Activated CD4-positive, alpha-beta memory T cell treated with anti-CD3 and anti-CD28 coated beads, Interleukin-2, amount 10 ng/mL, durations not matched to agents 7 days and 5 days (primary cell): ENCODE measurements at regions of chr11 and their contacts with region 1.

Region 1: GRCh38 chr11:62841361-62842184 is 2.2 kb upstream of the WDR74 start:
- DNase-seq: peak; percentile 87
- H3K4me3 Mint-ChIP-seq: no peak overlapping the region
- H3K27ac Mint-ChIP-seq: no peak overlapping the region
- H3K4me1 Mint-ChIP-seq: peaks cover 27% of the 10 kb centered on the region
- H3K27me3 Mint-ChIP-seq: no peaks in the 10 kb centered on the region

Region 2: DNA sequence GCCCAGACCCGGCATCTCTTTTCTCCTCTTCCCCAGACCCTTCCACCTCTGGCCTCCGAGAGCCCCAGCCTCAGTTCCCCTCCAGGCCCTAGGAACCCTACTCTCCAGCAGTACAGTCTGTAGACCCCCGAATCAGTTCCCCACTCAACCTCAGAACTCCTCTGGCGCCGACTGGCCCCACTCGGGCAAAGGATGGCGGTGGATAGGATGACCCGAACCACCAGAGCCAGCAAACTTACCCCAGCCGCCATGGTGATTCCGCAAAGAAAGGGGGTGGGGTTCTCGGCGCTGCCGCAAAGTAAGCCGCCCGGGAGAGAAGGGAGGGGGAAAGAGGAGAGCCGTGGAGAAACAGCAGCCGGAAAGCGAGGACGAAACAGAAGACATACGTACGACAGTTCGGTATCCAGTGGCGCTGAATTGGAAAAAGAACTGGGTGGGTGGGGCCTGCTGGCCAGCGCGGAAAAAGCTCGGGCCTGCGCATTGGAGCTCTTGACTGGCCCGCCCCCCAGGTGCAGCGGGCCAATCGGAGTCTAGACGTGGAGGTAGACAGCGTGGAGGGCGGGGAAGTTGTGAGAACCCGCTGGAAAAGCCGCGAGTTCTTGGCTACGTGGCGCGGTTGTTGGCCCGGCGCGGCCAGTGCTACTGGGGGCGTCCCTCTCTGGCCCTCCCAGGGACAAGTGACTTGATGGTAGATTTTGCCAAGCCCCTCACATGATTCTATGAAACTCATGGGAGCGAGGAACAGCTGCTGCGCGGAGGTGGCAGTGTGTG is 267.8 kb before region 1 on chr11 and contains the start of gene EEF1G:
- CTCF ChIA-PET with region 1: no interaction called
- POLR2A ChIA-PET with region 1: interaction called, 23 read pairs
- DNase-seq: peak; percentile 99
- H3K4me3 Mint-ChIP-seq: peak within 1 kb of the TSS; percentile 94
- H3K27ac Mint-ChIP-seq: peak within 1 kb of the TSS; percentile 91
- H3K4me1 Mint-ChIP-seq: peaks cover 58% of the 10 kb centered on the region
- H3K27me3 Mint-ChIP-seq: no peaks in the 10 kb centered on the region
- total RNA-seq, gene EEF1G: 991 to 999 TPM

Region 3: DNA sequence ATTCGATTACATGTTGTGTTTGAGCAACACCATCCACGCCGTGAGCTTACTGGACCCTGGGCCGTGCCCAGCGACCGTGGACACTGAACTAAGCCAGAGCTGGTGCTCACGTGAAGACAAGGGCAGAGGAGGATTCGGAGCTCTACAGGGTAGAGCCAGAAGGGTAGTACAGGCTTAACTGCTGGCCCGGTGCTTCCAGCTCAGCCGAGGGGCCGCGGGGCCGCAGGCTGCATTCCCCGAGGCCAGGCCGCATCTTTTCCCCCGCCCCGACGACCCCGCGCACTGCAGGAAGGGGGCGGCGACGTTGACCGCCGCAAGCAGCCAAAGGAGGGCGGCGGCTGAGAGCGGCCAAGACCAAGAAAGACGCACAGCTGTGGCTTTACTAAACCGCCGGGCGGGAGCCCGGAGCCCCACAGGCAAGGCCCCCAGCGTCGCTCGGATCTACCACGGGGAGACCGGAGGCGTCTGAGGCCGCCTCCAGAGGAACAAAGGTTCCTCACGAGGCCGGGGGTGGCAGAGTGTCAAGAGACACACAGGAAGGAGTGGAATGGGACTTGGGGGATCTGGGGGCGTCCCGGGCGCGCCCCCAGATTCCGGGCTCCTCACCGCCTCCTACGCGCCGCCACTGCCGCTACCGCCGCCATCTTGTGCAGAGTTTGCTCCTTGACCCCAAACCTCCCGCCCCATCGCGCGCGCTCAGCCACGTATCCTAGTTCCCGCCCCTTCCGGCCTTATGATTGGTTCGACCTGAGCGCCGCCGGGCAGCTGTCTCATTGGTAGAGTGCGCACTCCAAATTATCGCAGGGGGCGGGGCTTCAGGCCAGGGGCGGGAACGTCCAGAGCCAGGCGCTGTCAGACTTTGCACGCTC is 195.4 kb before region 1 on chr11 and contains the start of gene GANAB:
- CTCF ChIA-PET with region 1: no interaction called
- POLR2A ChIA-PET with region 1: interaction called, 19 read pairs
- DNase-seq: peak; percentile 99
- H3K4me3 Mint-ChIP-seq: peak within 1 kb of the TSS; percentile 99
- H3K27ac Mint-ChIP-seq: peak within 1 kb of the TSS; percentile 94
- H3K4me1 Mint-ChIP-seq: peaks cover 47% of the 10 kb centered on the region
- H3K27me3 Mint-ChIP-seq: no peaks in the 10 kb centered on the region
- total RNA-seq, gene GANAB: 278 to 284 TPM

Region 4: GRCh38 chr11:62713343-62713742 is 128.2 kb before region 1 on chr11:
- CTCF ChIA-PET with region 1: no interaction called
- POLR2A ChIA-PET with region 1: interaction called, 84 read pairs
- DNase-seq: no peak
- H3K4me3 Mint-ChIP-seq: peak overlapping the region; percentile 47
- H3K27ac Mint-ChIP-seq: peak overlapping the region; percentile 93
- H3K4me1 Mint-ChIP-seq: peaks cover 78% of the 10 kb centered on the region
- H3K27me3 Mint-ChIP-seq: no peaks in the 10 kb centered on the region

Region 5: DNA sequence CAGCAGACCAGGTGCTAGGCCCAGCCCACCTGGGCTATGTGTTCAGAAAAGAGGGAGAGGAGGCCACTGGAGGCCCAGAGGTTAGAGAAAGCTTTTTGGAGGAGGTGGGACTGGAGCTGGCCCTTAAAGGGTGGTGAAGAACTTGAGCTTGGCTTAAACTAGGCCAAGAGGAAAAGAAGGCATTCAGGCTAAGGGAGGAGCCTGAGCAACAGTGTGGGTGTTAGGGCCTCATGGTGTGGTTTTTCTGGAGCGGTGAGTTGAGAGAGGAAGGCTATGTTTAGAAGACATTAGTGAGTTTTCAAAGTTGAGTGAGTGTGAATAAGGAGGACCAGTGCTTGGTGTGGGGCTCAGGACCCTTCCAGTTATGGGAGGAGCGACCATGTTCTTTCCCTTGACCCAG is 64.2 kb before region 1 on chr11:
- CTCF ChIA-PET with region 1: no interaction called
- POLR2A ChIA-PET with region 1: interaction called, 73 read pairs
- DNase-seq: no peak
- H3K4me3 Mint-ChIP-seq: no peak overlapping the region
- H3K27ac Mint-ChIP-seq: peak overlapping the region; percentile 49
- H3K4me1 Mint-ChIP-seq: peaks cover 13% of the 10 kb centered on the region
- H3K27me3 Mint-ChIP-seq: no peaks in the 10 kb centered on the region

Region 6: GRCh38 chr11:62816557-62816956 is 25.0 kb before region 1 on chr11:
- CTCF ChIA-PET with region 1: interaction called, 4 read pairs
- POLR2A ChIA-PET with region 1: interaction called, 13 read pairs
- DNase-seq: no peak
- H3K4me3 Mint-ChIP-seq: no peak overlapping the region
- H3K27ac Mint-ChIP-seq: no peak overlapping the region
- H3K4me1 Mint-ChIP-seq: peaks cover 6% of the 10 kb centered on the region
- H3K27me3 Mint-ChIP-seq: no peaks in the 10 kb centered on the region

Region 7: GRCh38 chr11:62880803-62881578 is 39.4 kb after region 1 on chr11 and contains the start of gene SLC3A2:
- CTCF ChIA-PET with region 1: interaction called, 10 read pairs
- POLR2A ChIA-PET with region 1: interaction called, 142 read pairs
- DNase-seq: peak; percentile 92
- H3K4me3 Mint-ChIP-seq: peak within 1 kb of the TSS; percentile 99
- H3K27ac Mint-ChIP-seq: peak within 1 kb of the TSS; percentile 100
- H3K4me1 Mint-ChIP-seq: peaks cover 51% of the 10 kb centered on the region
- H3K27me3 Mint-ChIP-seq: no peaks in the 10 kb centered on the region
- total RNA-seq, gene SLC3A2: 262 to 279 TPM